ENCODE measurements at regions of chr4 and their contacts with region 1.

Region 1: GRCh38 chr4:70666369-70666768 is at the start of gene JCHAIN:
- DNase-seq: peak; percentile 70
- H3K4me3 ChIP-seq: peak within 1 kb of the TSS; percentile 98
- H3K27ac ChIP-seq: peak within 1 kb of the TSS; percentile 91
- H3K4me1 ChIP-seq: peaks cover 60% of the 10 kb centered on the region
- CTCF ChIP-seq: no peak
- total RNA-seq, gene JCHAIN: 1,460 and 1,542 TPM in 2 replicates

Region 2: GRCh38 chr4:70678383-70678999 is 12.1 kb after region 1 on chr4:
- CTCF ChIA-PET with region 1: interaction called, 13 read pairs
- POLR2A ChIA-PET with region 1: interaction called, 837 read pairs
- intact Hi-C with region 1: loop called (anchors 1 kb)
- DNase-seq: peak; percentile 96
- H3K4me3 ChIP-seq: peak overlapping the region; percentile 44
- H3K27ac ChIP-seq: peak overlapping the region; percentile 97
- H3K4me1 ChIP-seq: peaks cover 88% of the 10 kb centered on the region
- CTCF ChIP-seq: no peak

Region 3: DNA sequence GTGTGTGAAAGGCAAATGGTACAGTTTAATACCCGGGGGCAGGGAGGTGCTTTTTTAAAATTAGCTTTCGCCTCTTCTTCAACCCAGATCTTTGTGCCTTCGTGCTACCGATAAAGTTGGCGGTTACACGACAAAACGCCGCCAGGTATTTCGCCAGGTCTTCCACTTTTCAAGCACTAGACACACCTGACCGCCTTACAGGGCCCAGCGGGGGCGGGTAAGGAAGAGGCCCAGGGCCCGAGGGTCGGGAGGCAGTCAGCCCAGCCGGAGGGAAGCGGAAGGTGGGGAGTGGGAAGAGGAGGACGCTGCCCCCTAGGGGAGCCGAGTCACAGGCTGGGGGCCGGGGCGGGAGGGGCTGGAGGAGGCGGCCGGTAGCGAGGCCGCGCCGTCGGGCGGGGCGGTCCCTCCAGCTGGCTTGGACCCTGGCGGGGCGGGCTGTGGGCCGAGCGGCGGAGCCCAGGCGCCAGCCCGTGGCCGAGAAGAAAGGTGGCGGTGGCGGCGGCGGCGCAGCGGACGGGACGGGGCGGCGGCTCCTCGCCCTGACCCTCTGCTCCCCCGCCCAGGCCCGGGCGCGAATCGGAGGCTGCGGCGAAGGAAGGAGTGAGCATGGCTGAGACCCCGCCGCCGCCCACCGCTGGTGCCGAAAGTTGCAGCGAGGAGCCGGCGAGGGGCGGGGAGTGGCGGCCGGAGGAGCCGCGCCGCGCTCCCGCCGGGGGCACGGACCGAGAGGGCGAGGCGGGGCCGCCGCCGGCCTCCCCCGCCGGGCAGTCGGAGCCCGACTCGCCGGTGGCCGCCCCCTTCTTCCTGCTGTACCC is 38.2 kb after region 1 on chr4:
- CTCF ChIA-PET with region 1: no interaction called
- POLR2A ChIA-PET with region 1: interaction called, 13 read pairs
- intact Hi-C with region 1: loop called (anchors 2 kb)
- DNase-seq: peak; percentile 85
- H3K4me3 ChIP-seq: peak overlapping the region; percentile 90
- H3K27ac ChIP-seq: peak overlapping the region; percentile 77
- H3K4me1 ChIP-seq: peaks cover 32% of the 10 kb centered on the region
- CTCF ChIP-seq: peak; percentile 71

Region 4: DNA sequence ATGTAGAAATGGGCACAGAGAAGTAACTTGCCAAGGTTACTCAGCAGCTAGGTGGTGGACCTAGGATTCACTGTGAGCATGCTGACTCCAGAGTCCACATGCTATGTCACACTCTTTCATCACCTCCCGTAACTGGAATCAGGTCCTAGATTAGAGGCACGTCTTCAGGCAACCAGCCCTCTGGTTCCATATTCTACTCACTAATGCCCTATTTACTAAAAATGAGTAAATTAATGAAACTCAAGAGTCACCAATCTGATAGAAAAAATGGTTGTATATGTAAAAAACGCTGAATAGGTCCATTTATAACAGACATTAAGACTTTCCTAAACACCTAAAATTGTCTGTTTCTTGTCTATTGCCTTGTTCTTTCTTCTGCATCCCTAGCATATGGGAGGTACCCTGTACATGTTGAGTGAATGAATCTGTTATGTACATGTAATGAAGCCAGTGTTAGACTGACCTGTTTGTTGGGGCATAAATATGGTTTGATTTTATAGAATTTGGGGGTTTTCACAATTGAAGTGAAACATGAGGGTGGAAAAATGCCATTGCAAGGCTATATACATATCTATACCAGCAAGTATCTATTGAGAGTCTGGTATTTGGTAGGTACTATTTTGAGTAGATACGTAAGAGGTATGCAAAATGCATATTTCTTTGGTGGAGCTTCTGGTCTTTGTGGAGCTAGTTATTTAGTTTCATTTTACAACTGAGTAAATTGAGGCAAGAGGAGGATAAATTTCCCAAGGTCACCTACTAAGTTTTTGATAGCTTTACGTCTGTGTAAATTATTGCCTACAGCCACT is 47.9 kb after region 1 on chr4:
- CTCF ChIA-PET with region 1: no interaction called
- POLR2A ChIA-PET with region 1: interaction called, 18 read pairs
- intact Hi-C with region 1: no loop called
- DNase-seq: no peak
- H3K4me3 ChIP-seq: peak overlapping the region; percentile 45
- H3K27ac ChIP-seq: peak overlapping the region; percentile 40
- H3K4me1 ChIP-seq: peaks cover 56% of the 10 kb centered on the region
- CTCF ChIP-seq: no peak

Region 5: GRCh38 chr4:70901984-70902576 is 235.7 kb after region 1 on chr4 and contains the start of gene MOB1B:
- CTCF ChIA-PET with region 1: no interaction called
- POLR2A ChIA-PET with region 1: interaction called, 10 read pairs
- intact Hi-C with region 1: no loop called
- DNase-seq: peak; percentile 91
- H3K4me3 ChIP-seq: peak within 1 kb of the TSS; percentile 95
- H3K27ac ChIP-seq: peak within 1 kb of the TSS; percentile 46
- H3K4me1 ChIP-seq: peaks cover 15% of the 10 kb centered on the region
- CTCF ChIP-seq: 0 out of 2 replicates have a peak, but pooled peaks have one; percentile 24
- total RNA-seq, gene MOB1B: 3.9 and 4.7 TPM in 2 replicates

Measured in OCI-LY7 (cell line).